ENCODE measurements at regions of chr14 and their contacts with region 1.

Region 1: GRCh38 chr14:57268161-57269069 is at the starts of genes AP5M1 and EXOC5:
- DNase-seq: peak; percentile 95
- H3K4me3 Mint-ChIP-seq: peak within 1 kb of the TSS; percentile 99
- H3K27ac Mint-ChIP-seq: peak within 1 kb of the TSS; percentile 99
- H3K4me1 Mint-ChIP-seq: peaks cover 57% of the 10 kb centered on the region
- H3K27me3 Mint-ChIP-seq: no peaks in the 10 kb centered on the region
- total RNA-seq, gene AP5M1: 22.8 to 23.3 TPM
- total RNA-seq, gene EXOC5: 65.0 to 68.1 TPM

Region 2: GRCh38 chr14:55333711-55334485 is 1934.5 kb before region 1 on chr14:
- CTCF ChIA-PET with region 1: no interaction called
- intact Hi-C with region 1: loop called (anchors 5 kb)
- DNase-seq: peak; percentile 21
- H3K4me3 Mint-ChIP-seq: peak overlapping the region; percentile 10
- H3K27ac Mint-ChIP-seq: peak overlapping the region; percentile 78
- H3K4me1 Mint-ChIP-seq: peaks cover 82% of the 10 kb centered on the region
- H3K27me3 Mint-ChIP-seq: no peaks in the 10 kb centered on the region

Region 3: GRCh38 chr14:56579345-56580220 is 688.8 kb before region 1 on chr14 and contains the start of gene TMEM260:
- CTCF ChIA-PET with region 1: no interaction called
- intact Hi-C with region 1: loop called (anchors 2 kb)
- DNase-seq: peak; percentile 93
- H3K4me3 Mint-ChIP-seq: peak within 1 kb of the TSS; percentile 88
- H3K27ac Mint-ChIP-seq: peak within 1 kb of the TSS; percentile 93
- H3K4me1 Mint-ChIP-seq: peaks cover 35% of the 10 kb centered on the region
- H3K27me3 Mint-ChIP-seq: no peaks in the 10 kb centered on the region
- total RNA-seq, gene TMEM260: 9.6 to 11.9 TPM

Region 4: GRCh38 chr14:57060276-57060955 is 208.0 kb before region 1 on chr14:
- CTCF ChIA-PET with region 1: no interaction called
- intact Hi-C with region 1: loop called (anchors 1 kb)
- DNase-seq: peak; percentile 52
- H3K4me3 Mint-ChIP-seq: no peak overlapping the region
- H3K27ac Mint-ChIP-seq: no peak overlapping the region
- H3K4me1 Mint-ChIP-seq: peaks cover 21% of the 10 kb centered on the region
- H3K27me3 Mint-ChIP-seq: peaks cover 8% of the 10 kb centered on the region

Region 5: GRCh38 chr14:57199921-57200320 is 68.5 kb before region 1 on chr14:
- CTCF ChIA-PET with region 1: no interaction called
- intact Hi-C with region 1: no loop called
- DNase-seq: no peak
- H3K4me3 Mint-ChIP-seq: no peak overlapping the region
- H3K27ac Mint-ChIP-seq: no peak overlapping the region
- H3K4me1 Mint-ChIP-seq: peaks cover 3% of the 10 kb centered on the region
- H3K27me3 Mint-ChIP-seq: peaks cover 6% of the 10 kb centered on the region

Region 6: GRCh38 chr14:57227083-57227482 is 41.3 kb before region 1 on chr14:
- CTCF ChIA-PET with region 1: no interaction called
- intact Hi-C with region 1: loop called (anchors 5 kb)
- DNase-seq: no peak
- H3K4me3 Mint-ChIP-seq: no peak overlapping the region
- H3K27ac Mint-ChIP-seq: no peak overlapping the region
- H3K4me1 Mint-ChIP-seq: peaks cover 7% of the 10 kb centered on the region
- H3K27me3 Mint-ChIP-seq: no peaks in the 10 kb centered on the region

Region 7: DNA sequence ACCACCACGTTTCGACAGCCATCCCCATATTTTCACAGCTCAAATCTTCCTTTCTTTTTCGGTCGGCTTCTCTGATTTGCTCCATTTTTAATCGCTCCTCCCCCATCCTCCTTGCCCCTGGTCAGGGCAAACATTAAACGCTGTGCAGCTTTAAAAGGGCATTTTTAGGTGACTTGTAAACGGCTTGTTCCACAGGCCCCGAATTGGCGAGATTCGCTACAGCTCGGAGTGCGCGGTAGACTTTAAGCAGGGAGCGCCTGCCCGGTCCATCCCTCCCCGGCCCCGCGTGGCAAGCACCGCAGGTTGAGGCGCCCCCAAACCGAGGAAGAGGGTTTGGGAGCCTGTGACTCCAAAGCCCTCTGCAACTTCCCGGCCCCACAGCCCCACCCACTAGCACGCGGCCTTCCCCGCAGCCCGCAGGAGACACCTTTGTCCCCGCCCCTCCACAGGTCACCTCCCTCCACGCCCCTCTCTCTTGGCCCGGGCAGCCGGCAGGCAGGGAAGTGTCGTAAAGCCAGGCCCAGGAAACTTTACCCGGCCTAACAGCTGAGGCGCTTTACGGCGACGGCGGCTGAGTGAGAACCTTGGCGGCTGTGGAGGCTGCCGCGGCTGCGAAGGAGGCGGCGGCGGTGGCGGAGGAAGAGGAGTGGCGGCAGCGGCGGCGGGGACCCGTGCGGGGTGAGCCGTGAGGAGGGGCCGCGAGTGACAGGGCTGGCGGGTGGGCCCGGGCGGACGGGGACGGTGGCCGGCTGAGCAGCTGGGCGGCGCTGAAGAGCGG is 121.8 kb after region 1 on chr14 and contains the start of gene NAA30:
- CTCF ChIA-PET with region 1: no interaction called
- intact Hi-C with region 1: loop called (anchors 1 kb)
- DNase-seq: peak; percentile 95
- H3K4me3 Mint-ChIP-seq: peak within 1 kb of the TSS; percentile 89
- H3K27ac Mint-ChIP-seq: peak within 1 kb of the TSS; percentile 93
- H3K4me1 Mint-ChIP-seq: peaks cover 35% of the 10 kb centered on the region
- H3K27me3 Mint-ChIP-seq: no peaks in the 10 kb centered on the region
- total RNA-seq, gene NAA30: 12.3 to 12.5 TPM

Region 8: DNA sequence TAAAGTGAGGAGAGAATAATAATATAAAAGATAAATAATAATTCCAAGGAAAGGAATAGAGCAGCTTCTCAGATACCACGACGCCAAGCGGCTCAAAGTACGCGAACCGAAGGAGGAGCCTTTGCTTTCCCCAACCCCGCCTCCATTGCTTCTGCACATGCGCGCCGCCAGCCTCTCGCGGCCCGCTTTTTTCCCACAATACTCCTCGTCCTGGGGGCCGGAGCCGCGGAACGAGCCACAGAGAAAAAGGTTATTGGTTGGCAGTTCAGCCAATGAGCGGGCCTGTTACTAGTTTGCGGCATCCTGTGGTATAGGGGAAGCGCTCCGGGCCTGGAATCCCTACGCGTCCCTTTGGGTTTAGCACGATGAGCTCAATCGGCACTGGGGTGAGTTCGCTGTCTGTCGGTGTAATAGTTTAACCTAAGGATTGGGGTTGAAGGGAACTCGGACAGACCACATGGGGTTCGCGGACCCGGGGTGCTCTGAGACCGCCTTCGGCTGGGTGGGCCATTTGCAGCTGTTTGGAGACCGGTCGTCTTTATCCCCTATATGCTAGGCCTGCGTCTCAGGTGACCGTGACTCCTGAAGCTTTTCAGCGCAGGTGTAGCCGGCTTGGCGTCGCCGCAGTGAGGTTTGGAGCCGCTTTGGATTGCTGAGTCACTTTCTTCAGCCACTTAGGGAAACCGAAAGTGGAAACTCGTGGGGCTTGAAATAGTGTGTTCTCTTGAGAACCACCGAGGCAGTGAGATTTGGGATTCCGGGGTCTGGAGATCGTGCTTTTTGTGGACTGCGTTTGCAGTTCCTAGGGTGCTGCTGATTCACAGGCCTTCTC is 976.4 kb after region 1 on chr14 and contains the start of gene PSMA3:
- CTCF ChIA-PET with region 1: no interaction called
- intact Hi-C with region 1: loop called (anchors 10 kb)
- DNase-seq: peak; percentile 99
- H3K4me3 Mint-ChIP-seq: peak within 1 kb of the TSS; percentile 98
- H3K27ac Mint-ChIP-seq: peak within 1 kb of the TSS; percentile 99
- H3K4me1 Mint-ChIP-seq: peaks cover 43% of the 10 kb centered on the region
- H3K27me3 Mint-ChIP-seq: no peaks in the 10 kb centered on the region
- total RNA-seq, gene PSMA3: 399 to 424 TPM

Measured in activated naive CD4-positive, alpha-beta T cell treated with anti-CD3 and anti-CD28 coated beads for 36 hours (primary cell).